Transverse colon (tissue), 4 donors: ENCODE measurements at regions of chr18 and their contacts with region 1.

Region 1: DNA sequence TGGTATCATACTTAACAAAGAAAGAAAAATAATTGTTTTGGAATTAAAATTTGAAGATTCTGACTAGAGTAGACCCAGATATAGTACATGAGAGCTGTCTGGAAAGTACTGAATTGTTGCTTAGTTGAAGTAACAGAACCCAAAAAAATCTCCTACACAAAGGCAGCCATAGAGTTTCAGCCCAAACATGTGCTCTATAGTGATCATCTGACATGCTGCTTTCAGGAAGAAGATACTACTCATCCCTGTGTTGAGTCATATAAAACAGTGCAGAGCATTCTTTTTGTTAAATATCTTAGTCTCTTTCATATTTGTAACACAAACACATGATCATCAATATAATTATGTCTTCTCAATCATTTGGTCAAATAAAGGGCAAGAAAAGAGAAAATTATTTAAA is 84.8 kb upstream of the PTPRM start:
- DNase-seq: no peak
- H3K4me3 ChIP-seq: no peak overlapping the region
- H3K27ac ChIP-seq: peak overlapping the region in 2 of 4 donors; percentile 25 to 75
- H3K4me1 ChIP-seq: peaks cover 0 to 3% (median 0%) of the 10 kb centered on the region in 4 donors
- H3K27me3 ChIP-seq: no peaks in the 10 kb centered on the region
- CTCF ChIP-seq: no peak
- EP300 ChIP-seq: no peak
- POLR2A ChIP-seq: no peak

Region 2: GRCh38 chr18:6659963-6660725 is 822.2 kb before region 1 on chr18:
- in situ Hi-C with region 1: no loop called
- intact Hi-C with region 1: loop called (anchors 5 kb)
- DNase-seq: no peak
- H3K4me3 ChIP-seq: no peak overlapping the region
- H3K27ac ChIP-seq: no peak overlapping the region
- H3K4me1 ChIP-seq: no peaks in the 10 kb centered on the region
- H3K27me3 ChIP-seq: no peaks in the 10 kb centered on the region
- CTCF ChIP-seq: no peak
- EP300 ChIP-seq: no peak
- POLR2A ChIP-seq: no peak

Region 3: DNA sequence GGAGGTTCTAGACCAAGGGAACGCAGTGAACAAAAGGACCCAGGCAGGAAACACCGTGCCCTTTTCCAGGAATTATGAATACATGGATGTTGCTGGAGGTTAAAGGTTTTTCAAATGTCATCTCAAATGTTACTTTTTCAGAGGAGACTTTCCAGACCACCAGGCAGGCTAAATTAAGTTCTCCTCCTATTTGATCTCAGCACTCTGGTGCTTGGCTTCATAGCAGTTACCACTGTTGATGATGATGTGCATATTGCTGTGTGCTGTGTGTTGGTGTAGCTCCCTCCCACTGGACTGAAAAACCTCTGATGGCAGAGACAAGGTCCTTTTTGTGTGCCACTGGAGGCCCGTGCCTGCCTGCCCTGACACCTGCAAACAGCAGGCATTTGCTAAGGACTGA is 52.5 kb before region 1 on chr18:
- in situ Hi-C with region 1: no loop called
- intact Hi-C with region 1: loop called (anchors 2 kb)
- DNase-seq: no peak
- H3K4me3 ChIP-seq: no peak overlapping the region
- H3K27ac ChIP-seq: no peak overlapping the region
- H3K4me1 ChIP-seq: no peaks in the 10 kb centered on the region
- H3K27me3 ChIP-seq: no peaks in the 10 kb centered on the region
- CTCF ChIP-seq: no peak
- EP300 ChIP-seq: no peak
- POLR2A ChIP-seq: no peak